ENCODE measurements at regions of chr1 and their contacts with region 1.

Region 1: DNA sequence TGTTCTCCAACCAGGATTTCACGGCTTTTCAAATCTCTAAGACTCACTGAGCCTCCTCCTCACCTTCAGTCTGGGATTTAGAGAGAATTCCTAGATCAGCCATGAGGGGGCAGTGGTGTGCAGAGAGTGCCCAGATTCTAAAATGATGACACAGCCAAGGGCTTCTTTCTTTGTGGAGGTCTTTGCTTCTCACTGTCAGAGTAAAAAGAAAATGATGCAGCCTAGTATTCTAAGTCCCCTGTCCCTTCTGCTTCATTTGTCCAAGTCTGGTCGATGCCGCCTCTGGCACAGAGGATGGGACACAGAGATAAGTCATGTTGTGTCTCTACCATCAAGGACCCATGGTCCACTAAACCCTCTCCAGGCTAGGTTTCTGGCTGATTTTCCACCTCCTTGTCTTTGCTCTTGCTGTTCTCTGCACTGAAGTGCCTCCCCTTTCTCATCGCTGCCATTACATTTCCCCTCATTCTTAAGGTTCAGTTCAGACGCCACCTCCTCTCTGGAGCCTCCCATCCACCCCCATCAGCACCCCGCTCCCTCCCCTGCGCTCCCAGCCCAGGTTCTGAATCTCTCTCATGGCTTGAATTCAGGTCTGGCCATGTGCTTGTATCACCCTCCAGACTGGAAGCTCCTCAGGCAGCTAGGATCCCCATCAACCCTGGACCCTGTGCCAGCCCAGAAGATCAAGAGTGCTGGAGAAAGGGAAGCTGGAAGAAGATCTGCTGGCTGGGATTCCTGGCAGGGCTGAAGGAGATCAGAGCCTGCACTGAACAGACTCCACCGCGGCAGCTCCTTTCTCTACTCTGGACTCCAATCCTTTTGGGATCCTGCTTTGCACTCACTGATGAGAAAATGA is 12.0 kb upstream of the TINAGL1 start:
- DNase-seq: peak in 1 of 2 donors; percentile 70
- H3K4me3 ChIP-seq: no peak overlapping the region
- H3K27ac ChIP-seq: peak overlapping the region; percentile 52 to 64
- H3K4me1 ChIP-seq: peaks cover 0 to 38% (median 33%) of the 10 kb centered on the region in 4 donors
- H3K27me3 ChIP-seq: peaks cover 0 to 28% of the 10 kb centered on the region in 2 donors
- CTCF ChIP-seq: peak; percentile 91 to 93

Region 2: DNA sequence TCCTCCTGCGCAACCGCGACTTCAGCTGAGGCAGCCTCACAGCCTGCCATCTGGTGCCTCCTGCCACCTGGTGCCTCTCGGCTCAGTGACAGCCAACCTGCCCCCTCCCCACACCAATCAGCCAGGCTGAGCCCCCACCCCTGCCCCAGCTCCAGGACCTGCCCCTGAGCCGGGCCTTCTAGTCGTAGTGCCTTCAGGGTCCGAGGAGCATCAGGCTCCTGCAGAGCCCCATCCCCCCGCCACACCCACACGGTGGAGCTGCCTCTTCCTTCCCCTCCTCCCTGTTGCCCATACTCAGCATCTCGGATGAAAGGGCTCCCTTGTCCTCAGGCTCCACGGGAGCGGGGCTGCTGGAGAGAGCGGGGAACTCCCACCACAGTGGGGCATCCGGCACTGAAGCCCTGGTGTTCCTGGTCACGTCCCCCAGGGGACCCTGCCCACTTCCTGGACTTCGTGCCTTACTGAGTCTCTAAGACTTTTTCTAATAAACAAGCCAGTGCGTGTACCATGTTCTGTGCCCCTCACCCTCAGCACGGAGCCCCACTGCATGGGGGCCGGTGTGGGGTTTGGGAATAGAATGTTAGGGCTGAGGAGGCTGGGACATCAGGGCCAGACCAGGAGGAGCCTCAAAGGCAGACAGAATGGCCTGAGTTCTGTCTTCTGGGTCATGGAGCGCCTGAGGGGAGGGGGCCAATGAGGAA is 130.0 kb before region 1 on chr1:
- intact Hi-C with region 1: no loop called
- DNase-seq: peak in 1 of 2 donors; percentile 59
- H3K4me3 ChIP-seq: no peak overlapping the region
- H3K27ac ChIP-seq: no peak overlapping the region
- H3K4me1 ChIP-seq: no peaks in the 10 kb centered on the region
- H3K27me3 ChIP-seq: peaks cover 0 to 6% of the 10 kb centered on the region in 2 donors
- CTCF ChIP-seq: no peak

Region 3: GRCh38 chr1:31593770-31594632 is 29.6 kb after region 1 on chr1:
- intact Hi-C with region 1: loop called (anchors 2 kb)
- DNase-seq: peak; percentile 82 to 88
- H3K4me3 ChIP-seq: no peak overlapping the region
- H3K27ac ChIP-seq: no peak overlapping the region
- H3K4me1 ChIP-seq: peaks cover 0 to 49% (median 19%) of the 10 kb centered on the region in 4 donors
- H3K27me3 ChIP-seq: no peaks in the 10 kb centered on the region
- CTCF ChIP-seq: peak; percentile 87 to 97

Region 4: GRCh38 chr1:31789259-31790065 is 225.1 kb after region 1 on chr1:
- intact Hi-C with region 1: loop called (anchors 5 kb)
- DNase-seq: peak; percentile 96 to 97
- H3K4me3 ChIP-seq: peak overlapping the region; percentile 52 to 72
- H3K27ac ChIP-seq: peak overlapping the region; percentile 72 to 78
- H3K4me1 ChIP-seq: peaks cover 0 to 13% (median 6%) of the 10 kb centered on the region in 4 donors
- H3K27me3 ChIP-seq: peaks cover 0 to 11% of the 10 kb centered on the region in 2 donors
- CTCF ChIP-seq: peak; percentile 90 to 91